Natural killer cell (primary cell): ENCODE measurements at regions of chr19 and their contacts with region 1.

Region 1: GRCh38 chr19:14031719-14032480 is at the start of gene IL27RA:
- DNase-seq: peak; percentile 77 to 90
- ATAC-seq: peak; percentile 79 to 90 (median 80)
- H3K4me3 ChIP-seq: peak within 1 kb of the TSS; percentile 96
- H3K4me3 Mint-ChIP-seq: peak within 1 kb of the TSS; percentile 95
- H3K27ac ChIP-seq: peak within 1 kb of the TSS; percentile 99
- H3K27ac Mint-ChIP-seq: peak within 1 kb of the TSS; percentile 92 to 93
- H3K4me1 ChIP-seq: peaks cover 40% of the 10 kb centered on the region
- H3K4me1 Mint-ChIP-seq: peaks cover 23 to 51% of the 10 kb centered on the region in 2 donors
- H3K27me3 ChIP-seq: no peaks in the 10 kb centered on the region
- H3K27me3 Mint-ChIP-seq: no peaks in the 10 kb centered on the region
- CTCF ChIP-seq: peak; percentile 54
- total RNA-seq, gene IL27RA: 38.4 to 61.1 (median 58.0) TPM

Region 2: DNA sequence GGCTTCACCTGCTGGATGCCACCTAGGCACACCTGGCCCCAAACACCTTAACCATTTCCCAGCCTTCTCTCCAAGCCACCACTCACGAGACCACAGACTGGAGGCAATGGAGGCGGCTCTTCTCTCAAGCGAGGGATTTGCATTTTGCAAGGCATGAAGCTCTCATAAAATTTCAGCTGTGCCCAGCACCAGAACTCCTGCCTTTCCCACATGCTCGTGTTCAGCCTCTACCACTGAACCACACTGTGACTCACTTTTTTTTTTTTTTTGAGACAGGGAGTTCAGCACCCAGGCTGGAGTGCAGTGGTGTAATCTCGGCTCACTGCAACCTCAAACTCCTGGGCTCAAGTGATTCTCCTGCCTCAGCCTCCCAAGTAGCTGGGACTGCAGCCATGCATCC is 144.4 kb before region 1 on chr19:
- intact Hi-C with region 1: loop called (anchors 1 kb)
- DNase-seq: peak in 1 of 2 donors; percentile 60
- ATAC-seq: peak; percentile 33 to 49 (median 35)
- H3K4me3 ChIP-seq: peak overlapping the region; percentile 3
- H3K4me3 Mint-ChIP-seq: peak overlapping the region; percentile 78
- H3K27ac ChIP-seq: peak overlapping the region; percentile 83
- H3K27ac Mint-ChIP-seq: peak overlapping the region; percentile 91 to 93
- H3K4me1 ChIP-seq: peaks cover 61% of the 10 kb centered on the region
- H3K4me1 Mint-ChIP-seq: peaks cover 27 to 45% of the 10 kb centered on the region in 2 donors
- H3K27me3 ChIP-seq: no peaks in the 10 kb centered on the region
- H3K27me3 Mint-ChIP-seq: no peaks in the 10 kb centered on the region
- CTCF ChIP-seq: no peak

Region 3: DNA sequence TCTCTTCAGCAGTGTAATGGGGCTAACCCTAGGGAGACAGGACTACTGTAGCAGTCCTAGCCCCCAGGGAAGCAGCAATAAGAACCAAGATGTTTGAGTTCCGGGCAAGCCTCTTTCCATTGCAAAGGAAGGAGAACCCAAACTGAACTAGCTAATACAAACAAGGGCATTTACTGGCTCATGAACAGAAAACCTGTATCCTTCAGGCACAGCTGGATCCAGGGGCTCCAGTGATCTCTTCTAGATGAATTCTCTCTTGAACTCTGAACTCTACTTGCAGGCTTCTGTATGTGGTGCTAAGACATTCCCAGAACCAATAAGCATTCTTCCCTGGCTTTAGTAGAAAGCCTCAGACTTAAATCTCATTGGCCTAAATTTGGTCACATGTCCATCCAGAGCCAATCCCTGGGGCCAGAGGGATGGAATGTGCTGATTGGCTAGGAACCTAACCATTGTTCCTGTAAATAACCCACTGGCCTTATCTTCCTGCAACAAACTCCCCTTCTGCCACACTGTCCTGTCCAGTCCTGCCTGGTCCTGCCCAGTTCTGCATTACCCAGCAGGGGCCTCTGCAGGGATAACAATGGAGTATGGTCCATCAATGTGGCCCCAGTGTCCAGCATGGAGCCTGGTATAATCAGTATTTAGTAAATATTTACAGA is 89.7 kb before region 1 on chr19:
- intact Hi-C with region 1: no loop called
- DNase-seq: no peak
- ATAC-seq: no peak
- H3K4me3 ChIP-seq: no peak overlapping the region
- H3K4me3 Mint-ChIP-seq: no peak overlapping the region
- H3K27ac ChIP-seq: no peak overlapping the region
- H3K27ac Mint-ChIP-seq: no peak overlapping the region
- H3K4me1 ChIP-seq: peaks cover 11% of the 10 kb centered on the region
- H3K4me1 Mint-ChIP-seq: no peaks in the 10 kb centered on the region
- H3K27me3 ChIP-seq: peaks cover 9% of the 10 kb centered on the region
- H3K27me3 Mint-ChIP-seq: peaks cover 0 to 4% of the 10 kb centered on the region in 2 donors
- CTCF ChIP-seq: no peak

Region 4: DNA sequence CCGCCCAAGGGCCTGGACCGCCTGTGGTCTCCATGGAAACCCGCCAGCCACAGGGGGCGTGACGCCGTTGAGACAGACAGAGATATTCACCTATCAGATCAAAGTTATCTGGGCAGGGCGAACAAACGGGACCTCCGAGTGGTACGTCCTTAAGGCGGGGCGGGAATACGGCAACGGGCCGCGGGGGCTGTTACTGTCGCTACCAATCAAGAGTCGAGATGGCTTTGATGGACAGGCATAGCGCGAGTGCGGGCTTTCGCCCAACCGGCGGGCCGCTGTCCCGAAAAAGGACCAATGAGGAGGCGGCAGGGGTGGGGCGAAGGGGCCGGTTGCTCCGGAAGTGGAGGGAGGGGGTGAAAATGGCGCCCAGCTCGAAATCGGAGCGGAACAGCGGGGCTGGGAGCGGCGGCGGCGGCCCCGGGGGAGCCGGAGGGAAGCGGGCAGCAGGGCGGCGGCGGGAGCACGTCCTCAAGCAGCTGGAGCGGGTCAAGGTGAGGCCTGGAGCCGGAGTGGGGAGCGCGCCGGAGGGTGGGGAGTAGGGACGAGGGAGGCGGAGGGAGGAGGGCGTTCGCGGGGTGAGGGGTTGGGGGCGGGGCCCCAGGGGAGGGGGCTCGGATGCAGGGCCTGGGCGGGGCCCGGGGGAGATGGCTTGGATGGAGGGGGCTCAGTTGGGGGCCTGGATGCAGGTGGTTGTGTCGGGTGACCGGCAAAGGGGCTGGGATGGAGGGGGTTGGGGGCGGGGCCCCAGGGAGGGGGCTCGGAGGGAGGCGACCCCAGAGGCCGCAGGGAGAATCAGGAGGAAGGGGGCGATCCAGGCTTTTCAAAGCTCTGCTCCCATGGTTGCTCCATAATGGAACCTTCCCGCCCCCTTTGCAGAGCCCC is 79.5 kb before region 1 on chr19 and contains the start of gene DCAF15:
- intact Hi-C with region 1: loop called (anchors 1 kb)
- DNase-seq: peak; percentile 98 to 99
- ATAC-seq: peak; percentile 94 to 99 (median 95)
- H3K4me3 ChIP-seq: peak within 1 kb of the TSS; percentile 54
- H3K4me3 Mint-ChIP-seq: peak within 1 kb of the TSS; percentile 98
- H3K27ac ChIP-seq: peak within 1 kb of the TSS; percentile 51
- H3K27ac Mint-ChIP-seq: peak within 1 kb of the TSS; percentile 95 to 97
- H3K4me1 ChIP-seq: peaks cover 24% of the 10 kb centered on the region
- H3K4me1 Mint-ChIP-seq: peaks cover 7 to 27% of the 10 kb centered on the region in 2 donors
- H3K27me3 ChIP-seq: no peaks in the 10 kb centered on the region
- H3K27me3 Mint-ChIP-seq: no peaks in the 10 kb centered on the region
- CTCF ChIP-seq: no peak
- total RNA-seq, gene DCAF15: 121 to 149 (median 124) TPM

Region 5: DNA sequence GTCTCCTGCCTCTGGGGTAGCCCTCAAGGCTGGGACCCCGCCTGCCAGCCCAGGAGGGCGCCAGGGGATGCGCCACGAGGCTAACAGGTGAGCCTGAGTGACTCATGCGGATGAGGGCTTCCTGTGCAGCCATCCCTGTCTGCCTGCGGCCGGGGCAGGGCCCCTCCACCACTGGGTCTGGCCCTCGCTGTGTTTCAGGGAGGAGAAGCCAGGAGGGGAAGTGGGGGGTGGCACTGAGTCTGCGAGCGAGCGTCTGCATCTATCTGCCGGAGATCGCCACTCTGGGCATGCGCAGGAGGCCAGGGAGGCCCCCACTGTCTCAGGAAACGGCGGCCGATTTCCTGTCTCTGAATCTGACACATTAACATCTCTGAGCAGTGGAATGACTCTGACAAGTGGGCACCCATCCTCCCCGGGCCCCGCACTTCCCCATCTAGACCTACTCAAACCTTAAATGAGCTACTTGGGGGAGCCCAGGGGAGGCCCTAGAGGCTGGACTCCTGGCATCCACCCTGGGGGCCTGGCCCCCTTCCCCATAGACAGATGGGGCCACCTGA is 45.5 kb before region 1 on chr19:
- intact Hi-C with region 1: loop called (anchors 5 kb)
- DNase-seq: peak; percentile 96 to 99
- ATAC-seq: peak; percentile 86 to 95 (median 87)
- H3K4me3 ChIP-seq: peak overlapping the region; percentile 17
- H3K4me3 Mint-ChIP-seq: peak overlapping the region; percentile 79
- H3K27ac ChIP-seq: peak overlapping the region; percentile 100
- H3K27ac Mint-ChIP-seq: peak overlapping the region; percentile 97 to 98
- H3K4me1 ChIP-seq: peaks cover 59% of the 10 kb centered on the region
- H3K4me1 Mint-ChIP-seq: peaks cover 29 to 49% of the 10 kb centered on the region in 2 donors
- H3K27me3 ChIP-seq: no peaks in the 10 kb centered on the region
- H3K27me3 Mint-ChIP-seq: no peaks in the 10 kb centered on the region
- CTCF ChIP-seq: no peak

Region 6: GRCh38 chr19:14048443-14049153 is 16.7 kb after region 1 on chr19:
- intact Hi-C with region 1: no loop called
- DNase-seq: peak; percentile 79 to 84
- ATAC-seq: peak; percentile 87 to 98 (median 90)
- H3K4me3 ChIP-seq: no peak overlapping the region
- H3K4me3 Mint-ChIP-seq: no peak overlapping the region
- H3K27ac ChIP-seq: no peak overlapping the region
- H3K27ac Mint-ChIP-seq: peak overlapping the region; percentile 57 to 82
- H3K4me1 ChIP-seq: no peaks in the 10 kb centered on the region
- H3K4me1 Mint-ChIP-seq: peaks cover 0 to 11% of the 10 kb centered on the region in 2 donors
- H3K27me3 ChIP-seq: no peaks in the 10 kb centered on the region
- H3K27me3 Mint-ChIP-seq: no peaks in the 10 kb centered on the region
- CTCF ChIP-seq: peak; percentile 98

Region 7: DNA sequence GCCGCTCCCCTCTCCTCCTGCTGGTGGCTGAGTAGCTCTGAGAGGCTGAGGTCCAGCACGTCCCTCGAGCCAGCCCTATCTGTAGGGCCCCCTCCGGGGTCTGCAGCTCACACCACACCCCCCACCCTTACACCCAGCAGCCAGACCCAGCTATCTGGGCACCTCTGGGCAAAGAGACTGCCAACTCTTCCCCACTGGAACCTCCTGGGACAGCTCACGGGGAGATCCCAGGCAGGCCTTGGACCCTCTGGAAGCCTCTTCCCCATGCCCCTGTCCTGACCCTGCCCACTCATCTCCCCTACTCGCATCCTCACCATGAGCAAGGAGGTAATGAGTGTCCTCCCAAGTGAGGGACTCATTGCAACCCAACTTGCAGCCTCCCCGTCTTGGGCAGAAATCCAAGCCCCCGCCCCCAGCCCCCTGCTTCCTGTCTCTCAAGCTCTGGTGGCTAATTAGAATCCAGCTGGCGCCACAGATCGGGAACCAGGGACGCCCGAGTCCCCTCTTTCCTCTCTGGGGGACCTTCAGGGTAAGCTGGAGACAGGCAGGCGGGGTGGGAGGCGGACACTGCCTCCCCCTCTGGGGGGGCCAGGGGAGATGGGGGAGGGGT is 151.9 kb after region 1 on chr19:
- intact Hi-C with region 1: no loop called
- DNase-seq: no peak
- ATAC-seq: no peak
- H3K4me3 ChIP-seq: no peak overlapping the region
- H3K4me3 Mint-ChIP-seq: no peak overlapping the region
- H3K27ac ChIP-seq: no peak overlapping the region
- H3K27ac Mint-ChIP-seq: no peak overlapping the region
- H3K4me1 ChIP-seq: no peaks in the 10 kb centered on the region
- H3K4me1 Mint-ChIP-seq: peaks cover 10% of the 10 kb centered on the region in 2 donors
- H3K27me3 ChIP-seq: no peaks in the 10 kb centered on the region
- H3K27me3 Mint-ChIP-seq: no peaks in the 10 kb centered on the region
- CTCF ChIP-seq: no peak